CD4-positive, alpha-beta T cell (primary cell): ENCODE measurements at regions of chr17 and their contacts with region 1.

Region 1: GRCh38 chr17:75855310-75856081 is at the start of gene WBP2:
- DNase-seq: peak; percentile 92 to 100 (median 95)
- ATAC-seq: peak; percentile 91
- H3K4me3 ChIP-seq: peak within 1 kb of the TSS; percentile 82
- H3K4me3 Mint-ChIP-seq: peak within 1 kb of the TSS; percentile 90
- H3K27ac ChIP-seq: peak within 1 kb of the TSS; percentile 87 to 90
- H3K27ac Mint-ChIP-seq: no peak within 1 kb of the TSS
- H3K4me1 ChIP-seq: peaks cover 45% of the 10 kb centered on the region
- H3K4me1 Mint-ChIP-seq: peaks cover 29% of the 10 kb centered on the region
- H3K27me3 ChIP-seq: no peaks in the 10 kb centered on the region
- H3K27me3 Mint-ChIP-seq: no peaks in the 10 kb centered on the region
- CTCF ChIP-seq: peak; percentile 53
- total RNA-seq, gene WBP2: 98.5 to 114 TPM

Region 2: GRCh38 chr17:75764711-75765421 is 90.6 kb before region 1 on chr17 and contains the start of gene GALK1:
- CTCF ChIA-PET with region 1: interaction called, 4 read pairs
- POLR2A ChIA-PET with region 1: interaction called, 18 read pairs
- intact Hi-C with region 1: no loop called
- DNase-seq: peak; percentile 58 to 89 (median 70)
- ATAC-seq: peak; percentile 95
- H3K4me3 ChIP-seq: peak within 1 kb of the TSS; percentile 65
- H3K4me3 Mint-ChIP-seq: peak within 1 kb of the TSS; percentile 74
- H3K27ac ChIP-seq: no peak within 1 kb of the TSS
- H3K27ac Mint-ChIP-seq: peak within 1 kb of the TSS; percentile 44
- H3K4me1 ChIP-seq: peaks cover 24% of the 10 kb centered on the region
- H3K4me1 Mint-ChIP-seq: peaks cover 16% of the 10 kb centered on the region
- H3K27me3 ChIP-seq: no peaks in the 10 kb centered on the region
- H3K27me3 Mint-ChIP-seq: no peaks in the 10 kb centered on the region
- CTCF ChIP-seq: peak; percentile 27
- total RNA-seq, gene GALK1: 5.9 to 6.0 TPM

Region 3: GRCh38 chr17:75822119-75822799 is 33.2 kb before region 1 on chr17:
- CTCF ChIA-PET with region 1: interaction called, 3 read pairs
- POLR2A ChIA-PET with region 1: interaction called, 20 read pairs
- intact Hi-C with region 1: no loop called
- DNase-seq: peak in 11 of 14 experiments; percentile 11 to 71 (median 45)
- ATAC-seq: peak; percentile 94
- H3K4me3 ChIP-seq: no peak overlapping the region
- H3K4me3 Mint-ChIP-seq: no peak overlapping the region
- H3K27ac ChIP-seq: peak overlapping the region; percentile 37 to 41
- H3K27ac Mint-ChIP-seq: peak overlapping the region; percentile 84
- H3K4me1 ChIP-seq: peaks cover 31% of the 10 kb centered on the region
- H3K4me1 Mint-ChIP-seq: peaks cover 17% of the 10 kb centered on the region
- H3K27me3 ChIP-seq: no peaks in the 10 kb centered on the region
- H3K27me3 Mint-ChIP-seq: no peaks in the 10 kb centered on the region
- CTCF ChIP-seq: no peak

Region 4: GRCh38 chr17:75845049-75845860 is 10.2 kb before region 1 on chr17:
- CTCF ChIA-PET with region 1: interaction called, 8 read pairs
- POLR2A ChIA-PET with region 1: interaction called, 125 read pairs
- intact Hi-C with region 1: loop called in 1 of 2 experiments (anchors 1 kb)
- DNase-seq: peak in 13 of 14 experiments; percentile 40 to 84 (median 55)
- ATAC-seq: peak; percentile 54
- H3K4me3 ChIP-seq: peak overlapping the region; percentile 81
- H3K4me3 Mint-ChIP-seq: peak overlapping the region; percentile 81
- H3K27ac ChIP-seq: peak overlapping the region; percentile 94 to 95
- H3K27ac Mint-ChIP-seq: peak overlapping the region; percentile 76
- H3K4me1 ChIP-seq: peaks cover 66% of the 10 kb centered on the region
- H3K4me1 Mint-ChIP-seq: peaks cover 26% of the 10 kb centered on the region
- H3K27me3 ChIP-seq: no peaks in the 10 kb centered on the region
- H3K27me3 Mint-ChIP-seq: no peaks in the 10 kb centered on the region
- CTCF ChIP-seq: peak; percentile 55

Region 5: GRCh38 chr17:75896415-75897159 is 41.1 kb after region 1 on chr17 and contains the start of gene TRIM65:
- CTCF ChIA-PET with region 1: interaction called, 33 read pairs
- POLR2A ChIA-PET with region 1: interaction called, 74 read pairs
- intact Hi-C with region 1: loop called in 1 of 2 experiments (anchors 1 kb)
- DNase-seq: peak; percentile 55 to 91 (median 74)
- ATAC-seq: peak; percentile 85
- H3K4me3 ChIP-seq: peak within 1 kb of the TSS; percentile 57
- H3K4me3 Mint-ChIP-seq: peak within 1 kb of the TSS; percentile 88
- H3K27ac ChIP-seq: peak within 1 kb of the TSS in 1 of 2 donors; percentile 29
- H3K27ac Mint-ChIP-seq: peak within 1 kb of the TSS; percentile 78
- H3K4me1 ChIP-seq: peaks cover 33% of the 10 kb centered on the region
- H3K4me1 Mint-ChIP-seq: peaks cover 25% of the 10 kb centered on the region
- H3K27me3 ChIP-seq: no peaks in the 10 kb centered on the region
- H3K27me3 Mint-ChIP-seq: no peaks in the 10 kb centered on the region
- CTCF ChIP-seq: peak; percentile 33
- total RNA-seq, gene TRIM65: 9.9 to 11.7 TPM